ENCODE measurements at regions of chr7 and their contacts with region 1.

Region 1: GRCh38 chr7:55073945-55074499 is 55.2 kb downstream of the EGFR start:
- DNase-seq: no peak
- H3K4me3 ChIP-seq: no peak overlapping the region
- H3K27ac ChIP-seq: peak overlapping the region; percentile 49 to 62
- H3K4me1 ChIP-seq: peaks cover 38% of the 10 kb centered on the region
- H3K27me3 ChIP-seq: no peaks in the 10 kb centered on the region
- CTCF ChIP-seq: no peak
- POLR2A ChIP-seq: no peak

Region 2: DNA sequence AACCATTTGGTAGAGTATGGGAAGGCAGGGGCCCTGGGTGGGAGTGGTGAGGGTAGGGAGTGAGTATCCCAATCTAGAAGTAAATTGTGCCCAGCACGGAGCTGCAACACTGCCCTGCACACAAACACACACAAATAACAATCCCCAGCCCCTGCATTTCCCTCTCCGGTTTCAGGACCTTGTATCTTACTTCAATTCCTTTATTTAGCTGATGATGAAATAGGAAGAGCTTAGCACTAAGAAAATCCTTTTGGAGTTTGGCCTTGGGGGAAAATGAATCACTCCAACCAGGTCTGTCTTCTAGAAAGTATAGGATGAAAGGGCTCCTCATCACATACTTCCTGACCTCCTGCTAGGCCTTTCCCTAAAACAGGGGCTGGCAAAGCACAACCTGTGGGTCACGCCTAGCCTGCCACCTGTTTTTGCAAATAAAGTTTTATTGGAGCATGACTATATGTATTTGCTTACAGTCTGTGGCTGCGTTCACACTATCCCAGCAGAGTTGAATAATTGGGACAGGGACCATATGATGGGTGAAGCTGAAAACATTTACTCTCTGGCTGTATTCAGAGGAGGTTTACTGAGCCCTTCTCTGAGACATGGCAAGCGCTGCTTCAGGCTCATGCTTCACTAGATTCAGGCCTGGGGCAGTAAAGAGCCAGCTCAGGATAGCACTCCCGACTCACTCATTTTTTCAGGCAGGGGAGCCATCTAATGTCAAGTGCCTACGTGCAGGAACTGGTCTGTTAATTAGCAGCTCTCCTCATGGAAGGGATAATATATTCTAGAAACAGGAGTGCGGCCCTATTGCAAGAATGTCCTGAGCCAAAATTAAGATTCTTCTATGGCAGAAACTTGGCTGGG is 55.7 kb after region 1 on chr7:
- intact Hi-C with region 1: loop called (anchors 10 kb)
- DNase-seq: no peak
- H3K4me3 ChIP-seq: no peak overlapping the region
- H3K27ac ChIP-seq: peak overlapping the region; percentile 18 to 73
- H3K4me1 ChIP-seq: peaks cover 50% of the 10 kb centered on the region
- H3K27me3 ChIP-seq: no peaks in the 10 kb centered on the region
- CTCF ChIP-seq: no peak
- POLR2A ChIP-seq: no peak